MCF 10A (cell line): ENCODE measurements at regions of chr6 and their contacts with region 1.

Region 1: DNA sequence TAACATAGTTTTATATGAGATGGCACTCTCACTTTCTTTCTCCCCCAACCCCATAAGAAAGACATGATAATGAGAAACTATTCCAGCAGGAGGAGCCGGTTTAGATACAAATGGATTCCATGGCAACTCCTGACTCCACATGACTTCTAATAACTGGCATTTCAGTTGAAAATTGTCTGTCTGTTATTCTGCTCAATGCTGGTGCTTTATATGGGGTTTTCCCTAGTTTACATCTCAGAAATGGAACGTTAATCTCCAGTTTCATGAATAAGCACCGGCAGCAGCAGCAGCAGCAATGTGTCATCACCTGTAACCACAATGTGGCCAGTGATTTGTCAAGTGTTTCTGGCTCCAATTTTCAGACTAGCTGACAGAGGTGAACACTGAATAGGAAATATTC is 8.0 kb upstream of the SIM1 start:
- DNase-seq: peak; percentile 65
- H3K4me3 Mint-ChIP-seq: no peak overlapping the region
- H3K27ac Mint-ChIP-seq: no peak overlapping the region
- H3K4me1 Mint-ChIP-seq: peaks cover 7% of the 10 kb centered on the region
- H3K27me3 Mint-ChIP-seq: no peaks in the 10 kb centered on the region
- CTCF ChIP-seq: no peak

Region 2: DNA sequence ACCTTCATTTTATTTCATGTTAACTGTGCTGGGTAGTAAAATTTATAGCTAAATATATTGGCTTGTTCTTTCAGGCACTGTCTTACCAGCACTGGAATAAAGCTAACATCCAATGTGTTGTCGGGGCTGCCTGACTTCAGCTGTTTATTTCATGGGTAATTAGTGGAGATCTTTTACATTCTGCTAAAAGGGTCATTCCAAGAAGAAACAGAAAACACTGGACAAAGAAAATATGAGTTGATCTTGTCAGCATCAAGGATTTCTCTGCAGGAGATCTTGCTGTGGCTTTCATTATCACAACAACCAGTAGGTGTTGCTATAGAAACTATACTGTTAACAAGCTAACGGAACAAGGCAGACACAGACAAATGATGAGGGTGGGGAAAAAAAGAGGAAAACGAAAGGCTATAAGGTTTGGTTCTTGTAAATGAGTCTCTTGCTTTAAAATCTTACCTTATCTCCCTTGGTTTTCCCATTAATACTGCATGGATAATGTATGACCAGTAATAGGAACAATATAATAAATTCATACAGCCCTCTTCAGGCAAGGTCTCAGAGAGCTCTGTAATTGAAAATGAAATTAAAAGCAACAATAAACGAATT is 214.8 kb before region 1 on chr6:
- CTCF ChIA-PET with region 1: interaction called, 3 read pairs
- POLR2A ChIA-PET with region 1: no interaction called
- intact Hi-C with region 1: loop called (anchors 1 kb)
- DNase-seq: peak; percentile 45
- H3K4me3 Mint-ChIP-seq: no peak overlapping the region
- H3K27ac Mint-ChIP-seq: peak overlapping the region; percentile 17
- H3K4me1 Mint-ChIP-seq: peaks cover 12% of the 10 kb centered on the region
- H3K27me3 Mint-ChIP-seq: no peaks in the 10 kb centered on the region
- CTCF ChIP-seq: peak; percentile 35